Heart left ventricle (tissue), 16 donors: ENCODE measurements at regions of chr10 and their contacts with region 1.

Region 1: GRCh38 chr10:95741807-95742467 is 14.0 kb upstream of the ENTPD1 start:
- DNase-seq: peak in 4 of 5 donors; percentile 37 to 73 (median 51)
- ATAC-seq: peak; percentile 93 to 98 (median 96)
- H3K4me3 ChIP-seq: no peak overlapping the region
- H3K27ac ChIP-seq: peak overlapping the region; percentile 64 to 88 (median 75)
- H3K4me1 ChIP-seq: peaks cover 0 to 36% (median 13%) of the 10 kb centered on the region in 12 donors
- H3K27me3 ChIP-seq: no peaks in the 10 kb centered on the region
- CTCF ChIP-seq: peak in 8 of 12 donors; percentile 8 to 46 (median 24)
- POLR2A ChIP-seq: no peak

Region 2: GRCh38 chr10:95792874-95793285 is 50.9 kb after region 1 on chr10:
- intact Hi-C with region 1: loop called in 1 of 10 experiments (anchors 5 kb)
- DNase-seq: peak in 2 of 5 donors; percentile 44 to 50
- ATAC-seq: peak; percentile 66 to 93 (median 85)
- H3K4me3 ChIP-seq: no peak overlapping the region
- H3K27ac ChIP-seq: peak overlapping the region in 11 of 12 donors; percentile 48 to 92 (median 78)
- H3K4me1 ChIP-seq: peaks cover 0 to 61% (median 22%) of the 10 kb centered on the region in 12 donors
- H3K27me3 ChIP-seq: no peaks in the 10 kb centered on the region
- CTCF ChIP-seq: no peak
- POLR2A ChIP-seq: no peak

Region 3: GRCh38 chr10:95814011-95814727 is 72.2 kb after region 1 on chr10:
- intact Hi-C with region 1: loop called in 1 of 10 experiments (anchors 10 kb)
- DNase-seq: peak in 4 of 5 donors; percentile 38 to 50 (median 39)
- ATAC-seq: peak in 3 of 4 donors; percentile 68 to 88 (median 74)
- H3K4me3 ChIP-seq: no peak overlapping the region
- H3K27ac ChIP-seq: peak overlapping the region in 8 of 12 donors; percentile 13 to 65 (median 24)
- H3K4me1 ChIP-seq: peaks cover 0 to 36% (median 16%) of the 10 kb centered on the region in 12 donors
- H3K27me3 ChIP-seq: no peaks in the 10 kb centered on the region
- CTCF ChIP-seq: no peak
- POLR2A ChIP-seq: no peak

Region 4: DNA sequence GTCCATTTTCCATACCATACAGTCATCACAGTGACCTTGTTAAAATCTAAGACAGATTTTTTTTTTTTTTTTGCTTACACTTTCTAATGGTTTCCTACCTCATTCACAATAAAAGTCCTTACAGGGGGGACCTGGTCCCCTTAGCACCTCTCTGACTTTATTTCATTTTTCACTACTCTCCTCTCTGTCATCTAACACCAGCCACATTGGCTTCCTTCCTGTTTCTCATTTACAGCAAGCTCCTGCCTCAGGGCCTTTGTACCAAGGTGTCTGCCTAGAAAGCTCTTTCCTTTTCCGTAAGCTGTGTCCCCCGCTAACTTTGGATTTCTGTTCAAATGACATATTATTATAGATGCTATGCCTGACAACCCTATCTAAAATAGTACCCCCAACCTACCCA is 193.5 kb after region 1 on chr10:
- intact Hi-C with region 1: no loop called
- DNase-seq: no peak
- ATAC-seq: no peak
- H3K4me3 ChIP-seq: no peak overlapping the region
- H3K27ac ChIP-seq: no peak overlapping the region
- H3K4me1 ChIP-seq: no peaks in the 10 kb centered on the region
- H3K27me3 ChIP-seq: no peaks in the 10 kb centered on the region
- CTCF ChIP-seq: no peak
- POLR2A ChIP-seq: no peak